Mammary epithelial cell (primary cell): ENCODE measurements at regions of chr2 and their contacts with region 1.

Region 1: GRCh38 chr2:189287982-189288521 is 108.5 kb upstream of the COL5A2 start:
- DNase-seq: peak; percentile 95
- H3K4me3 ChIP-seq: no peak overlapping the region
- H3K27ac ChIP-seq: peak overlapping the region; percentile 76
- H3K4me1 ChIP-seq: peaks cover 19% of the 10 kb centered on the region
- H3K27me3 ChIP-seq: no peaks in the 10 kb centered on the region
- CTCF ChIP-seq: peak; percentile 48 to 63

Region 2: GRCh38 chr2:189096769-189097447 is 191.1 kb before region 1 on chr2:
- CTCF ChIA-PET with region 1: no interaction called
- dilution Hi-C with region 1: no loop called
- in situ Hi-C with region 1: no loop called
- intact Hi-C with region 1: loop called (anchors 1 kb)
- DNase-seq: peak; percentile 60
- H3K4me3 ChIP-seq: no peak overlapping the region
- H3K27ac ChIP-seq: no peak overlapping the region
- H3K4me1 ChIP-seq: peaks cover 6% of the 10 kb centered on the region
- H3K27me3 ChIP-seq: no peaks in the 10 kb centered on the region
- CTCF ChIP-seq: no peak

Region 3: DNA sequence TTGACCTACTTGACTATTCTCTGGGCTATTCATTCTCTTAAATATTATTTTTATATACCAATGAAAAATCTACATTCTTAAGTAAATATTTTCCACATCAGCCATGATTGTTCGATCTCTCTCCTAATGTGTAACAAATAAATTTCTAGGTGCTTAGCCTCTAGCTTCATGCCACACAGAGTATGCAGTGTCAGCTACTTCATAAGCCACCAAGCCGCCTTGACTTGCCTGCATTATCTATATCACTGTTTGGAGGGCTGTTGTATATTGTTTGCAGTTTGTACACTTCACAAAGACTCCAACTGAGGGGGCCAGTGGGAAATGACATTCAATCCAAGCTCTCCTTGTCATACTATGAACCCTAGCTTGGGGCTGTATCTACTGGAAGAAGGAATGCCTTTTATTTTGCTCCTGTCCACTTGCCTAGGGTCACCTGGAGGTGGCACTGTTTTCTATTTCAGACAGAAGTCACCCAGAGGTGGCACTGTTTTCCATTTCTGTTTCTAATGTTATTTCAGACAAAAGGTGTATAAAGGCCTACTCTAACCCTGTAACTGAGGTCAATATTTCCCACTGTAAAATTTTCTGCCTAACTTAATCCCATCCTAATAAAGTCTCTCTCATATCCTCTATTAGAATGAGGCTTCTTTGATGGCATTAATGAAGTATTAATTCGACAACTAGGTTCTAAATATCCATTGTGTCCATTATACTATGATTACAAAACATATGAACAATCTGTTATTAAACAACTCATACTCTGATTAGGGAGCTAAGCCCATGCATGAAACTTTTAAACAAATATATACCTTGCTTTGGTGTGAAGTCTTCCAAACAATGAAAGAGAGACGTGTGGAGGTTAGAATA is 144.9 kb before region 1 on chr2:
- CTCF ChIA-PET with region 1: interaction called, 4 read pairs
- dilution Hi-C with region 1: no loop called
- in situ Hi-C with region 1: loop called (anchors 5 to 10 kb)
- intact Hi-C with region 1: loop called (anchors 1 kb)
- DNase-seq: peak; percentile 52
- H3K4me3 ChIP-seq: no peak overlapping the region
- H3K27ac ChIP-seq: no peak overlapping the region
- H3K4me1 ChIP-seq: no peaks in the 10 kb centered on the region
- H3K27me3 ChIP-seq: no peaks in the 10 kb centered on the region
- CTCF ChIP-seq: peak; percentile 96 to 98

Region 4: GRCh38 chr2:189232759-189233406 is 55.2 kb before region 1 on chr2:
- CTCF ChIA-PET with region 1: no interaction called
- dilution Hi-C with region 1: no loop called
- in situ Hi-C with region 1: no loop called
- intact Hi-C with region 1: loop called (anchors 5 kb)
- DNase-seq: peak; percentile 33
- H3K4me3 ChIP-seq: no peak overlapping the region
- H3K27ac ChIP-seq: peak overlapping the region; percentile 88
- H3K4me1 ChIP-seq: peaks cover 18% of the 10 kb centered on the region
- H3K27me3 ChIP-seq: no peaks in the 10 kb centered on the region
- CTCF ChIP-seq: no peak

Region 5: DNA sequence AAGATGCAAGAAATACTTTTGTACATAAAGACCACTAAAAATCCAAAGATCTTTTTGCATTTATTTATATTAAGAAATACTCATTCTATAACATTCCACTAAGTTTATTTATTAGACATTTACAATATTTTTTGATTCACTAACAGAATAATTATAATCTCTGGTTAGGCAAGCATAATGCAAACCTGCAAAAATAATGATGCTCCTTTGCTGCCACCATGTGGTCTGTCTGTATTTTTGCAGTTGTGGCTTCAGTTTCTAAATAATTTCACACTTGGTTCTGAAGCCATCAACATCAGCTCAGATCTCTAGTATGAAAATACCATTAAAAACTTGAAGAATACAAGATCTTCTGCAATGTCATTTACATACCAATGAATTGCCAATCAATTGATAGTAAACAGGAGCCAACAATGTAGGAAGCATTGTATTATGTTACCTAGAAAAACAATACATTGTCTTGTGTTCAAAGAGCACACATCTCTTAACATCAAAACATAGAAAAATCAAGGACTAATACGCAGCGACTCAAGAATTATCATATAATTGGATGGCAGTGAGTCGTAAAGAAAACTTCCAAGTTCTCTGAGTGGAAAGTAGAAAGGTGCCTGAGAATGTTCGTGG is 124.4 kb after region 1 on chr2:
- CTCF ChIA-PET with region 1: no interaction called
- dilution Hi-C with region 1: no loop called
- in situ Hi-C with region 1: loop called in 1 of 2 experiments (anchors 25 kb)
- intact Hi-C with region 1: loop called (anchors 1 kb)
- DNase-seq: no peak
- H3K4me3 ChIP-seq: no peak overlapping the region
- H3K27ac ChIP-seq: no peak overlapping the region
- H3K4me1 ChIP-seq: peaks cover 18% of the 10 kb centered on the region
- H3K27me3 ChIP-seq: no peaks in the 10 kb centered on the region
- CTCF ChIP-seq: peak; percentile 63 to 74